AG04450 (cell line): ENCODE measurements at regions of chr3 and their contacts with region 1.

Region 1: GRCh38 chr3:173676094-173676493 is 278.6 kb downstream of the NLGN1 start:
- DNase-seq: no peak
- H3K4me3 ChIP-seq: no peak overlapping the region
- H3K27ac ChIP-seq: no peak overlapping the region
- H3K27me3 ChIP-seq: no peaks in the 10 kb centered on the region
- CTCF ChIP-seq: no peak

Region 2: DNA sequence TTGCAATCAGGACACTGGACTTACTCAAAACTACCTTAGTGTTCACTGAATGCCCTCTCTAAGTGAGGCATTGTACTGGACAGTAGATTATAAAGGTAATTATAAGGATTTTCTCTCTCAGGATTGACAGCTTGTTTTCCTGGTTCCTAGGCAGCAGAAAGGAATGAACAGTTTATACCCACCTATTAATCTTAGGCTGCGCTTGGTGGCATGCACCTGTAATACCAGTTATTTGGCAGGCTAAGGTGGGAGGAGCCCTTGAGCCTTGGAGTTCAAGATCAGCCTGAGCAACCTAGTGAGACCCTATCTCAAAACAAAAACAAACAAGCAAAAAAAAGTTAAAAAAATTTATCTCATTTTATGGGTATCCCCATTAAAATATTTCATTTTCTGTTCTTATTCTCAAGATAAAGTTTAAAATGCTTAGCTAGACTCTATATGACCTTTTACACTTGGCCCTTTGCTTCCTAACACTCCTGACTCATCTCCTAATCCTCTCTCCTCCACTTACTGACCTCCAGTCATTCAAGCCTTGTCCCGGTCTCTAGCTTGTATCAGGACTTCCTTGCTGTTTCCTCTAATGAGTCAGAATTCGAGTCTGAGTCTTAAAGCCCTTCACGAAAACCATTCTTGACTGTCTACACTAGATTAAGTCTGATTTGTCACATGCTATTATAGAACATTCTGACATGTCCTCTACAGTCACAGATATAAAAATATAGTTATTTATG is 70.0 kb after region 1 on chr3:
- CTCF ChIA-PET with region 1: no interaction called
- POLR2A ChIA-PET with region 1: no interaction called
- DNase-seq: no peak
- H3K4me3 ChIP-seq: no peak overlapping the region
- H3K27ac ChIP-seq: no peak overlapping the region
- H3K27me3 ChIP-seq: no peaks in the 10 kb centered on the region
- CTCF ChIP-seq: no peak

Region 3: DNA sequence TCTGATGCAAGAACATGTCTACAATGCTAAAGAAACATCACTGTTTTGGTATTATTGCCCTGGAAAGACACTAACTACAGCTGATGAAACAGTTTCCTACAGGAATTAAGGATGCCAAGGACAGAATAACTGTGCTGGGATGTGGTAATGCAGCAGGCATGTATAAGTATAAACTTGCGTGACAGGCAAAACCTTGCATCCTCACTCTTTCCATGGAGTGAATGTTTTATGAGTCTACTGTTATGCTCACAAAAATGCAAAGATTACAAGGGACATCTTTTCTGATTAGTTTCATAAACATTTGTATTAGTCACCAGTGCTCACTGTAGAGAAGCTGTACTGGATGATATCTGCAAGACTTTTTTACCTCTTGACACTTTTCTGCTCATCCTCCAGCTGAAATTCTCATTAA is 1326.6 kb after region 1 on chr3:
- CTCF ChIA-PET with region 1: interaction called, 16 read pairs
- POLR2A ChIA-PET with region 1: no interaction called
- DNase-seq: peak; percentile 96
- H3K4me3 ChIP-seq: no peak overlapping the region
- H3K27ac ChIP-seq: peak overlapping the region; percentile 91
- H3K27me3 ChIP-seq: no peaks in the 10 kb centered on the region
- CTCF ChIP-seq: no peak